PC-9 (cell line): ENCODE measurements at regions of chr17 and their contacts with region 1.

Region 1: DNA sequence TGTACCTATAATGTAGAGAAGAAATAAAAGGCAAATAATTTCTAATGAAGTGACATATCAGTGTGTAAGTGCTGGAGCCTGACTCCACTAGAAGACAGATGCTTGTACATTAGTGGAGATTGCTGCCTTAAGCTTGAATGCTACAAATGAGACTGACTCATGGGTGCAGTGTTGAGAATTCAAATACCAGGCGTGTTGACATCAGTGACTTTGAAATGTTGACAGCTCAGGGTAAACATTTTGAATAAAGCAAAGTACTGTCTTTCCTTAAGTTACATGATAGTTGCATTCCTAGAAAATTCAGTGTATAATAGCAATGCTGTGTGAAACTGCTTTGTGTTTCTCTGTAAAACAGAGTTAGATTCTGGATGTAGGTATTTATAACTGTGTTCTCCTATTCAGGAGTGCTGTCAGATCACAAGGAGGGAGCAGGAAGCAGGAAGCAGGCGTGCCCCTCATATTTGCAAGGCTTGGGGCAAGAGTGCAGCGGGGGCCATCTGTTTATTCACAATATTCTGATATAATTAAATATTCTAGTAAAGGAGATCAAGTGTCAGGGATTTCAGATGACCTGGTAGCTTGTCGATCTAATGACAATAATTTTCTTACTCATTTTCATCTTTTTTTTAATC is 119.0 kb downstream of the SPECC1 start:
- DNase-seq: no peak
- H3K4me3 ChIP-seq: no peak overlapping the region
- H3K27ac ChIP-seq: no peak overlapping the region
- H3K4me1 ChIP-seq: no peaks in the 10 kb centered on the region
- H3K27me3 ChIP-seq: no peaks in the 10 kb centered on the region
- CTCF ChIP-seq: no peak

Region 2: DNA sequence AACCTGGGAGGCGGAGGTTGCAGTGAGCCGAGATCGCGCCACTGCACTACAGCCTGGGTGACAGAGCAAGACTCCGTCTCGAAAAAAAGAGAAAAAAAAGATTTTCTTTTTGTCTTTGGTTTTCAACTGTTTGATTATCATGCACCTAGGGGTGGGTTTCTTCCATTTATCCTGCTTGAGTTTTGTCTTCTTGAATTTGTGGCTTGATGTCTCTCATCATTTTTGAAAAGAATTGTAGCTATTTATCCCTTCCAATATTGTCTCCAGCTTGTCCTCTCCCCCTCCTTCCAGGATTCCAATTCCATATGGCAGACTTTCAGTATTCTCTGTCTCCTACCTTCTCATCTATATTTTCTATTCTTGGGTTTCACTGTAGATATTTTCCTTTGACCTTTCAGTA is 773.4 kb before region 1 on chr17:
- CTCF ChIA-PET with region 1: no interaction called
- POLR2A ChIA-PET with region 1: interaction called, 33 read pairs
- intact Hi-C with region 1: no loop called
- DNase-seq: no peak
- H3K4me3 ChIP-seq: no peak overlapping the region
- H3K27ac ChIP-seq: no peak overlapping the region
- H3K4me1 ChIP-seq: peaks cover 9% of the 10 kb centered on the region
- H3K27me3 ChIP-seq: no peaks in the 10 kb centered on the region
- CTCF ChIP-seq: no peak

Region 3: DNA sequence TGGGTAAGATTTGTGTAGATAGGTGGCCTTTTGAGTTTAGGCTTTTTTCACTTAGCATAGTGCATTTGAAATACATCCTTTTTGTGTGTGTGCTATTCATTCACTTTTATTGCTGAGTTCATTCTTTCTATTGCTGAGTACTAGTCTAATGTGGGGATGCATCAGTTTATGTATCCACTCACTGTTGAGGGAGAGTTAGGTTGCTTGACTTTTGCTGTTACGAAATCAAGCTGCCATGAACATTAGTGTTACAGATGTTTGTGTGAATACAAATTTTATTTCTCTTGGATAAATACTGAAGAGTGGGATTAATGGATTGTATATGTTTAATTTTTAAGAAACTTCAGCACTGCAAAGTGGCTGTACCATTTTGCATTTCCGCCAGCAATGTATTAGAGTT is 44.7 kb before region 1 on chr17:
- CTCF ChIA-PET with region 1: no interaction called
- POLR2A ChIA-PET with region 1: no interaction called
- intact Hi-C with region 1: no loop called
- DNase-seq: no peak
- H3K4me3 ChIP-seq: no peak overlapping the region
- H3K27ac ChIP-seq: no peak overlapping the region
- H3K4me1 ChIP-seq: 0 out of 2 replicates have a peak, but pooled peaks cover 5% of the 10 kb centered on the region
- H3K27me3 ChIP-seq: no peaks in the 10 kb centered on the region
- CTCF ChIP-seq: no peak

Region 4: GRCh38 chr17:20141198-20141972 is 13.2 kb after region 1 on chr17:
- CTCF ChIA-PET with region 1: no interaction called
- POLR2A ChIA-PET with region 1: no interaction called
- intact Hi-C with region 1: no loop called
- DNase-seq: no peak
- H3K4me3 ChIP-seq: no peak overlapping the region
- H3K27ac ChIP-seq: no peak overlapping the region
- H3K4me1 ChIP-seq: no peaks in the 10 kb centered on the region
- H3K27me3 ChIP-seq: no peaks in the 10 kb centered on the region
- CTCF ChIP-seq: no peak

Region 5: GRCh38 chr17:20234276-20234675 is 106.1 kb after region 1 on chr17:
- CTCF ChIA-PET with region 1: no interaction called
- POLR2A ChIA-PET with region 1: no interaction called
- intact Hi-C with region 1: no loop called
- DNase-seq: no peak
- H3K4me3 ChIP-seq: no peak overlapping the region
- H3K27ac ChIP-seq: no peak overlapping the region
- H3K4me1 ChIP-seq: no peaks in the 10 kb centered on the region
- H3K27me3 ChIP-seq: no peaks in the 10 kb centered on the region
- CTCF ChIP-seq: no peak

Region 6: GRCh38 chr17:20315821-20316220 is 187.7 kb after region 1 on chr17:
- CTCF ChIA-PET with region 1: no interaction called
- POLR2A ChIA-PET with region 1: no interaction called
- intact Hi-C with region 1: no loop called
- DNase-seq: no peak
- H3K4me3 ChIP-seq: no peak overlapping the region
- H3K27ac ChIP-seq: no peak overlapping the region
- H3K4me1 ChIP-seq: no peaks in the 10 kb centered on the region
- H3K27me3 ChIP-seq: no peaks in the 10 kb centered on the region
- CTCF ChIP-seq: no peak